Endothelial cell of umbilical vein (primary cell): ENCODE measurements at regions of chr19 and their contacts with region 1.

Region 1: DNA sequence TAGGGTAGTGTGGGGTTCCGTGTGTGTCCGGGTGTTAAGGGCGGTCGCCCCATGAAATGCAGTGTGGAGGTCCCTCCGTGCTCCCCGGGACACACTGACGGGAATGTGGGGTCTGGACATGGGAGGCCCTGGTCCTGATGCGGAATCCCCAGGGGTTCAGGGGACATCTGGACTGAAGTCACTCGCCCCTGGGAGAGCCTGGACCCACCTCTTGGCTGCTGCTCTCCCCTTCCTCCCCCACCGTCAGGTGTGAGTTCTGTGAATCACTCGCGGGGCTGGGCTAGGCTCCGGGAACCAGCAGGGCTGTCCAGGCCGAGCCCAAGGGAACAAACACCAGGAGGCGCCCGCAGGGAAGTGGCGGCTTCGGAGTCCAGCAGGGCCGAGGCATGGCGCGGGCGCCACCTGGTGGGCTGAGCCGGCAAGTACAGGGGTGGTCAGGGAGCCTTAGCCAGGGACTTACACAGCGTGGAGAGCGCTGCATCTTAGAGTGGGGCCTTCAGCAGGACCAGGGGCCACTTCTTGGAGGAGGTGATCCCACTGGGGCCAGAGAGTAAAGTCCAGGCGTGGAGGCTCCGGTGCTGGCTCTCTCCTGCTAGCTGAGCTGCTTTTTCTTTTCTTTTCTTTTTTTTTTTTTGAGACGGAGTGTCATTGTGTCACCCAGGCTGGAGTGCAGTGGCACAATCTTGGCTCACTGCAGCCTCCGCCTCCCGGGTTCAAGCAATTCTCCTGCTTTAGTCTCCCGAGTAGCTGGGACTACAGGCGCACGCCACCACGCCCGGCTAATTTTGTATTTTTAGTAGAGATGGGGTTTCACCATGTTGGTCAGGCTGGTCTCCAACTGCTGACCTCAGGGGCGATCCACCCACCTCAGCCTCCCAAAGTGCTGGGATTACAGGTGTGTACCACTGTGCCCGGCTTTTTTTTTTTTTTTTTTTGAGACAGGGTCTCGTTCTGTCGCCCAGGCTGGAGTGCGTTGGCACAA is 20.1 kb downstream of the WTIP start:
- DNase-seq: peak; percentile 91
- H3K4me3 ChIP-seq: no peak overlapping the region
- H3K27ac ChIP-seq: no peak overlapping the region
- H3K4me1 ChIP-seq: no peaks in the 10 kb centered on the region
- H3K27me3 ChIP-seq: no peaks in the 10 kb centered on the region
- CTCF ChIP-seq: peak; percentile 100
- POLR2A ChIP-seq: no peak

Region 2: GRCh38 chr19:34452723-34453122 is 48.9 kb before region 1 on chr19:
- CTCF ChIA-PET with region 1: no interaction called
- POLR2A ChIA-PET with region 1: no interaction called
- dilution Hi-C with region 1: no loop called
- intact Hi-C with region 1: no loop called
- DNase-seq: no peak
- H3K4me3 ChIP-seq: no peak overlapping the region
- H3K27ac ChIP-seq: no peak overlapping the region
- H3K4me1 ChIP-seq: no peaks in the 10 kb centered on the region
- H3K27me3 ChIP-seq: no peaks in the 10 kb centered on the region
- CTCF ChIP-seq: no peak
- POLR2A ChIP-seq: no peak

Region 3: DNA sequence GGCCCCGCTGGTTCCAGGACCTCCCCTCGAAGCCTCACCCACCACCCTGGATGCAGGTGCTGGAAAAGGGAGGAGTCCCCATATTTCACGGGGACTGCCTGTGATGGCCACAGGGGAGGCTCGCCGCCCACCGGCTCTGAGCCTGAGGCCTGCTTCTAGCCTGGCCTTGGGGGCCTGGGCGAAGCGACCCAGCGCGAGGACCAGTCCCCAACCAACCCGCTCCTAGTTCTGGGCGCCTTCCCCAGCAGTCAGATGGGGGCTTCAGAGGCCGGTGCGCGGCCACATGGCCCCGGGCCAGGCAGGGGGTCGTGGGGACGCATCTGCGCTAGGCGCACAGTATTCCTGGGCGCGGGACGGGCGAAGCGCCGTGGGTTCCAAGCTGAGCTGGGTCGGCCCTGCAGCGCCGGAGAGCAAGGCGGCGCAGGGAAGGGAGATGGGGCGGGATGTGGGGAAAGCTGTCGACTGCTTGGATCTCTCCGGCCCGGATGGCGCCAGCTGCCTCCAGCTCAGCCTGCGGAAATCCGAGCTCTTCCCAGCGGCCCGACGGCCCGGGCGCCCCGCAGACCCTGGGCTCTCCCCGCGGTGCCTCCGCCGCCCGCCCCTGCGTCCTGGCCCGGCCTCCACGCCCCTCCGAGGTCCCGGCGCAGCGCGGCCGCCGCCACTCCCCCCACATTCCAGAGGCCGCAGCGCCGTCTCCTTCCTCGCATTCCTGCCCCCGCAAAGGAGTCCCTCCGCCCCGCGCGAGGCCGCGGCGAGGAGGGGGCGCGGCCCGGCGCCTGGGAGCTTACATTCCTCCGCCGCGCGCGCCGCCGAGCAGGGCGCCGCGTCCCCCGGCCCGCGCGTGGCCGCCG is 20.4 kb before region 1 on chr19 and contains the start of gene WTIP:
- CTCF ChIA-PET with region 1: interaction called, 6 read pairs
- POLR2A ChIA-PET with region 1: no interaction called
- dilution Hi-C with region 1: no loop called
- intact Hi-C with region 1: loop called (anchors 1 kb)
- DNase-seq: peak; percentile 82
- H3K4me3 ChIP-seq: peak within 1 kb of the TSS; percentile 45 to 77 (median 53)
- H3K27ac ChIP-seq: peak within 1 kb of the TSS; percentile 65
- H3K4me1 ChIP-seq: peaks cover 16% of the 10 kb centered on the region
- H3K27me3 ChIP-seq: no peaks in the 10 kb centered on the region
- CTCF ChIP-seq: no peak
- POLR2A ChIP-seq: peak; percentile 56
- total RNA-seq, gene WTIP: 25.7 and 26.9 TPM in 2 replicates

Region 4: DNA sequence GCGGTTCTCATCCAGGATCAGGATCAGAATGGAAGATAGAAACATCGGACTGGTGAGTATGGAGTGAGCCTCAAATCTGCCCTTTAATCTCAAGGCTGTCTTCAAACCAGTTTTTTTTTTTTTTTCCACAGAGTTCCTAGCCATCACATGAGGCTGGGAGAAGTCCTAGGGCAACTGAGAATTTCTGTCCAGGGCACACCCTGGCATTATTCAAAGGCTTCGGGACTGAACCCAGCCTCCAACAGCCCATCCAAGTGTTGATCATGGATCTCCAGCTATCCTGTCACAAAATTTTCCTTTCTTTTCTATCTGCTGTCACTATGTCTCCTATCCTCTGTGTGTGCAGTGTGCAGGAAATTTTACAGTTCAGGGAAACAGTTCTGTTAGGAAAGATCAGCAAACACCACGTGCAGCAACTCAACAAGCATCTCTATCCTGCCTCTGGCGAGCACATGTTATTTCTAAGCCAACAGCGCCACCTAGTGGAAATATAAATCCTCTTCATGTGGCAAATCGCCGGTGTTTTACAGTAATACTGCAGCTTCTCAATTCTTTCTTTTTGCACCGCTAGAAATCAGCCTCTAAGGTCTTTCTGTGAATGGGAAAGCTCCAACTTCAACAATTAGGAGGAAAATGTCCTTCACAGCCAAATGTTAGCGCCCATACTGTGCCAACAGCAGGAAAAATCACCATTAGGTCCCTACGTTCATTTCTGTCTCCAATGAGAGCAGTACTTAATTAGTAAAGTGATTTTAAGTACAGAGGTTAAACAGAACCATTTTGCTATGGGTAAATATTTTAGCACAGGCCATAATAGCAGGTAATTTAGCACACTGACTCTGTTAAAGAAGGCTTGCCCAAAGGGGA is 211.0 kb after region 1 on chr19:
- CTCF ChIA-PET with region 1: interaction called, 9 read pairs
- POLR2A ChIA-PET with region 1: no interaction called
- dilution Hi-C with region 1: no loop called
- intact Hi-C with region 1: loop called (anchors 1 kb)
- DNase-seq: peak; percentile 75
- H3K4me3 ChIP-seq: no peak overlapping the region
- H3K27ac ChIP-seq: no peak overlapping the region
- H3K4me1 ChIP-seq: no peaks in the 10 kb centered on the region
- H3K27me3 ChIP-seq: peaks cover 3% of the 10 kb centered on the region in 2 experiments
- CTCF ChIP-seq: peak; percentile 39 to 40
- POLR2A ChIP-seq: no peak